B cell (primary cell): ENCODE measurements at regions of chr5 and their contacts with region 1.

Region 1: GRCh38 chr5:141430332-141431113 is at the start of gene PCDHGA12:
- DNase-seq: peak; percentile 65
- ATAC-seq: peak; percentile 82
- H3K4me3 ChIP-seq: peak within 1 kb of the TSS in 4 of 5 experiments; percentile 30 to 35 (median 32)
- H3K4me3 Mint-ChIP-seq: peak within 1 kb of the TSS; percentile 86
- H3K27ac ChIP-seq: no peak within 1 kb of the TSS
- H3K27ac Mint-ChIP-seq: peak within 1 kb of the TSS; percentile 29
- H3K4me1 ChIP-seq: peaks cover 15 to 17% of the 10 kb centered on the region in 2 donors
- H3K4me1 Mint-ChIP-seq: peaks cover 7% of the 10 kb centered on the region
- H3K27me3 ChIP-seq: peaks cover 0 to 57% (median 30%) of the 10 kb centered on the region in 4 experiments
- H3K27me3 Mint-ChIP-seq: peaks cover 46% of the 10 kb centered on the region
- CTCF ChIP-seq: peak; percentile 68
- total RNA-seq, gene PCDHGA12: 1.6 and 2.8 TPM in 2 replicates

Region 2: DNA sequence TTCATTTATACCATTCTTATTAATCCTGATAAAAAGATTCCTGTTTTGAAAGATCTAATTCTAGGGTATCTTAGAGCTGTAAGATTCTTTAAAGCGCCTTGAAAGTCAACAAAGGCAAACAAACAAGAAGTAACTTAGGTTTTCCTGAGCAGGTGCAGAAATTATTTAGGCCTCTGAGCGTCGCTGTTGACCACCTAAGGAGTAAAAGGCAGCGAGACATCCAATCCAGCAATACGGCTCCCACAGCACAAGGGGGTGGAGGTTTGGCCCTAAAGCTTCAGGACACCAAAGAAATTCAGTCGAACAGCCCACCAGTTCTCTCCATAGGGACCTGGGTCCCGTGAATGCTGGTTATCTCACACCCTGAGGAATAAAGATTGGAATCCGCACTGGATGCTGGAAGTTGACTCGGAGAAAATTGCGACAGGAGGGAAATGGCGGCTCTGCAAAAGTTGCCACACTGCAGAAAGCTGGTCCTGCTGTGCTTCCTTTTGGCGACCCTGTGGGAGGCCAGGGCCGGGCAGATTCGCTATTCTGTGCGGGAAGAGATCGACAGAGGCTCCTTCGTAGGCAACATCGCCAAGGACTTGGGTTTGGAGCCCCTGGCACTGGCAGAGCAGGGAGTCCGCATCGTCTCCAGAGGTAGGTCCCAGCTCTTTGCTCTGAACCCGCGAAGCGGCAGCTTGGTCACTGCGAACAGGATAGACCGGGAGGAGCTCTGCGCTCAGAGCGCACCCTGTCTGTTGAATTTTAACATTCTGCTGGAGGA is 91.8 kb before region 1 on chr5 and contains the start of gene PCDHGA2:
- CTCF ChIA-PET with region 1: no interaction called
- POLR2A ChIA-PET with region 1: no interaction called
- intact Hi-C with region 1: no loop called
- DNase-seq: no peak
- ATAC-seq: no peak
- H3K4me3 ChIP-seq: no peak within 1 kb of the TSS
- H3K4me3 Mint-ChIP-seq: peak within 1 kb of the TSS; percentile 13
- H3K27ac ChIP-seq: no peak within 1 kb of the TSS
- H3K27ac Mint-ChIP-seq: no peak within 1 kb of the TSS
- H3K4me1 ChIP-seq: peaks cover 0 to 4% of the 10 kb centered on the region in 2 donors
- H3K4me1 Mint-ChIP-seq: peaks cover 2% of the 10 kb centered on the region
- H3K27me3 ChIP-seq: peaks cover 0 to 55% (median 47%) of the 10 kb centered on the region in 4 experiments
- H3K27me3 Mint-ChIP-seq: peaks cover 74% of the 10 kb centered on the region
- CTCF ChIP-seq: no peak
- total RNA-seq, gene PCDHGA2: 0.07 and 0.29 TPM in 2 replicates

Region 3: DNA sequence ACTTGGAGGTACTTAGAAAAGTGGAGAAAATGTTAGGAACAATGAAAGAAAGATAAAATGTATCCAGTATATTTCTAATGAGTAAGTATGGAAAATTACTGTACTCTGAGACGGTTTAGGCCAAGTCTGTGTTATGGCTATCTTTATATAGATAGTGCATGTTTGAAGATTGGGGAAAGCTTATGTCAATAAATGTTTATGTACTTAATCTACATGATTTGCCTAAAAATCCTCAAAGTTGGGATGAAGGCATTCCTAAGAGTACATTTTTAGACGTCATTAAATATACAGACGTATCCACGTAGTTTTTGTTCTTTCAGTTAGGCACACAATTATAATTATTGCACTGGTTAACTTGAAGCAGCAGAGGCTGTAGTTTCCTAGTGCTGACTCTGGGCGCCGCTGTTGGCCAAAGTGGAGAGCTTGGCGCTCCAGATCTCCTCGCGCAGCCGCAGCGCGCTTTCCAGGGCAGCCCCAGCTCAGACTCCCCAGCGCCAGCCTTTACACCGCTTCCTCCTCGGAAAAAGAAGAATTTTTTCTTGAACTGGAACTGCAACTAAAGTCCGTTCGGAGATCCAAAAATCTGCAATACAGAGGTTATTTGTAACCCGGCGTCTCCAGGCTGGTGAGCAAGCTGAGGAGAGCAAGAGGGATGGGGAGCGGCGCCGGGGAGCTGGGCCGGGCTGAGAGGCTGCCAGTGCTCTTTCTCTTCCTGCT is 43.1 kb before region 1 on chr5 and contains the start of gene PCDHGB4:
- CTCF ChIA-PET with region 1: no interaction called
- POLR2A ChIA-PET with region 1: no interaction called
- intact Hi-C with region 1: no loop called
- DNase-seq: peak; percentile 8
- ATAC-seq: peak; percentile 65
- H3K4me3 ChIP-seq: no peak within 1 kb of the TSS
- H3K4me3 Mint-ChIP-seq: peak within 1 kb of the TSS; percentile 45
- H3K27ac ChIP-seq: no peak within 1 kb of the TSS
- H3K27ac Mint-ChIP-seq: no peak within 1 kb of the TSS
- H3K4me1 ChIP-seq: no peaks in the 10 kb centered on the region
- H3K4me1 Mint-ChIP-seq: peaks cover 3% of the 10 kb centered on the region
- H3K27me3 ChIP-seq: peaks cover 0 to 61% (median 37%) of the 10 kb centered on the region in 4 experiments
- H3K27me3 Mint-ChIP-seq: peaks cover 63% of the 10 kb centered on the region
- CTCF ChIP-seq: peak; percentile 24
- total RNA-seq, gene PCDHGB4: 1.6 and 1.8 TPM in 2 replicates

Region 4: GRCh38 chr5:141412854-141413539 is 17.5 kb before region 1 on chr5 and contains the start of gene PCDHGA10:
- CTCF ChIA-PET with region 1: interaction called, 18 read pairs
- POLR2A ChIA-PET with region 1: no interaction called
- intact Hi-C with region 1: no loop called
- DNase-seq: peak; percentile 65
- ATAC-seq: peak; percentile 68
- H3K4me3 ChIP-seq: peak within 1 kb of the TSS; percentile 5 to 63 (median 45)
- H3K4me3 Mint-ChIP-seq: peak within 1 kb of the TSS; percentile 87
- H3K27ac ChIP-seq: no peak within 1 kb of the TSS
- H3K27ac Mint-ChIP-seq: peak within 1 kb of the TSS; percentile 17
- H3K4me1 ChIP-seq: peaks cover 11 to 15% of the 10 kb centered on the region in 2 donors
- H3K4me1 Mint-ChIP-seq: peaks cover 18% of the 10 kb centered on the region
- H3K27me3 ChIP-seq: peaks cover 0 to 69% (median 55%) of the 10 kb centered on the region in 4 experiments
- H3K27me3 Mint-ChIP-seq: peaks cover 59% of the 10 kb centered on the region
- CTCF ChIP-seq: peak; percentile 82
- total RNA-seq, gene PCDHGA10: 1.9 and 2.0 TPM in 2 replicates

Region 5: GRCh38 chr5:141475625-141476131 is 45.2 kb after region 1 on chr5 and contains the start of gene PCDHGC3:
- CTCF ChIA-PET with region 1: interaction called, 11 read pairs
- POLR2A ChIA-PET with region 1: no interaction called
- intact Hi-C with region 1: no loop called
- DNase-seq: peak; percentile 65
- ATAC-seq: peak; percentile 95
- H3K4me3 ChIP-seq: peak within 1 kb of the TSS; percentile 35 to 64 (median 49)
- H3K4me3 Mint-ChIP-seq: peak within 1 kb of the TSS; percentile 95
- H3K27ac ChIP-seq: no peak within 1 kb of the TSS
- H3K27ac Mint-ChIP-seq: peak within 1 kb of the TSS; percentile 47
- H3K4me1 ChIP-seq: peaks cover 23 to 32% of the 10 kb centered on the region in 2 donors
- H3K4me1 Mint-ChIP-seq: peaks cover 29% of the 10 kb centered on the region
- H3K27me3 ChIP-seq: peaks cover 0 to 47% (median 30%) of the 10 kb centered on the region in 4 experiments
- H3K27me3 Mint-ChIP-seq: peaks cover 36% of the 10 kb centered on the region
- CTCF ChIP-seq: no peak
- total RNA-seq, gene PCDHGC3: 1.9 and 2.0 TPM in 2 replicates

Region 6: DNA sequence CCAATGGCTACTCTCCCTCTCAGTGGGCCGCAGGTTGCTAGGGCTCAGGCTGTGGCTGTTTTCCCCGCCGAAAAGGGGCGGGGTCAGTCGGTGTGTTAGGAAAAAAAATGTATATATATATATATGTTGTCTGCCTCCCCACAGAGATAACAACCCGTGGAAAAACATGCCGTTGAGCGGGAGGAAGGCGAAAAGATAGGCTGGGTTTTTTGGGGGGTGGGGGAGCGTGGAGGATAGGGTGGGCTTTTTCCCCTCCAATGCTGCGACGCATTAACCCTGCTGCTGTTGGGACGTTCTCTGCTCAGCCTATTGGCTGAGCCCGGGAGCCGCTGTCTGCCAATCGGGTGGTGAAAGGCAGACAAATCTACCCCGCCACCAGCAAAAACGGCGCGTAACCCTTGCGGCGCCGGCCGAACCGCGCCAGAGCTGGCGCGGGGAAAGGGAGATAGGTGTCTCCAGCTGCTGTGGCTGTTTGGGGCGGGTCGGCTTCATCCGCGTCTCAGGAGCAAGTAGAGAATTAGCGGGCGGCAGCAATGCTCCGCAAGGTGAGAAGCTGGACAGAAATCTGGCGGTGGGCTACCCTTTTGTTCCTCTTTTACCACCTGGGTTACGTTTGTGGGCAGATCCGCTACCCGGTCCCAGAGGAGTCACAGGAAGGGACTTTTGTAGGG is 54.3 kb after region 1 on chr5 and contains the start of gene PCDHGC4:
- CTCF ChIA-PET with region 1: interaction called, 10 read pairs
- POLR2A ChIA-PET with region 1: no interaction called
- intact Hi-C with region 1: no loop called
- DNase-seq: peak; percentile 32
- ATAC-seq: peak; percentile 17
- H3K4me3 ChIP-seq: peak within 1 kb of the TSS in 4 of 5 experiments; percentile 3 to 39 (median 18)
- H3K4me3 Mint-ChIP-seq: peak within 1 kb of the TSS; percentile 40
- H3K27ac ChIP-seq: no peak within 1 kb of the TSS
- H3K27ac Mint-ChIP-seq: no peak within 1 kb of the TSS
- H3K4me1 ChIP-seq: peaks cover 15 to 18% of the 10 kb centered on the region in 2 donors
- H3K4me1 Mint-ChIP-seq: peaks cover 16% of the 10 kb centered on the region
- H3K27me3 ChIP-seq: peaks cover 0 to 58% (median 31%) of the 10 kb centered on the region in 4 experiments
- H3K27me3 Mint-ChIP-seq: peaks cover 74% of the 10 kb centered on the region
- CTCF ChIP-seq: no peak
- total RNA-seq, gene PCDHGC4: 0.42 and 0.75 TPM in 2 replicates

Region 7: GRCh38 chr5:141605523-141606277 is 175.2 kb after region 1 on chr5:
- CTCF ChIA-PET with region 1: no interaction called
- POLR2A ChIA-PET with region 1: no interaction called
- intact Hi-C with region 1: no loop called
- DNase-seq: peak; percentile 88
- ATAC-seq: peak; percentile 98
- H3K4me3 ChIP-seq: peak overlapping the region in 3 of 5 experiments; percentile 12 to 45 (median 22)
- H3K4me3 Mint-ChIP-seq: peak overlapping the region; percentile 64
- H3K27ac ChIP-seq: peak overlapping the region; percentile 72 to 84
- H3K27ac Mint-ChIP-seq: peak overlapping the region; percentile 80
- H3K4me1 ChIP-seq: peaks cover 47 to 69% of the 10 kb centered on the region in 2 donors
- H3K4me1 Mint-ChIP-seq: peaks cover 70% of the 10 kb centered on the region
- H3K27me3 ChIP-seq: no peaks in the 10 kb centered on the region
- H3K27me3 Mint-ChIP-seq: no peaks in the 10 kb centered on the region
- CTCF ChIP-seq: peak; percentile 14